ENCODE measurements at regions of chr2 and their contacts with region 1.

Region 1: GRCh38 chr2:31886697-31887096 is 124.1 kb downstream of the MEMO1 start:
- DNase-seq: peak in 2 of 4 experiments; percentile 16 to 44
- ATAC-seq: peak; percentile 95
- H3K4me3 ChIP-seq: no peak overlapping the region
- H3K27ac ChIP-seq: no peak overlapping the region
- H3K4me1 ChIP-seq: no peaks in the 10 kb centered on the region
- H3K27me3 ChIP-seq: no peaks in the 10 kb centered on the region
- CTCF ChIP-seq: peak; percentile 38 to 45 (median 44); a peak in 4 of 6 replicates
- EP300 ChIP-seq: no peak
- POLR2A ChIP-seq: no peak
- RAD21 ChIP-seq: peak in 1 of 2 experiments; percentile 45; a peak in 2 of 4 replicates

Region 2: DNA sequence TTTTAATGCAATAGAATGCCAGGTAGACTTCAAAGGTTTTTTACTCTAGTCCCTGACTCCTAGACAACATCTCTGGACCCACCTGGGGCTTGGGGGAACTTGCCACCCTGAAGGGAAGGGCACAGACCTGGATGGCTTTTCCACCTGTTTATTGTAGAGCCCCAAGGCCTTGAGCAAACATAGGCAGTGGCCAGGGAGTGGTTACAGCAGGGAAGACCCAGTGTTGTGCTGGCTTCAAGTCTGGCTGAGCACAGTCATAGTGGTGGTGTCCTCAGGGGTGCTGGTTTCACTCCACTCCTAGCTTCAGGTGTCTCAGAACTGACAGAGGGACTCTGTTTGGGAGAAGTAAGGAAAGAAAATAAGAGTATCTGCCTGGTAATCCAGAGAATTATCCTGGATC is 300.5 kb before region 1 on chr2:
- CTCF ChIA-PET with region 1: no interaction called
- POLR2A ChIA-PET with region 1: no interaction called
- in situ Hi-C with region 1: no loop called
- intact Hi-C with region 1: no loop called
- DNase-seq: no peak
- ATAC-seq: no peak
- H3K4me3 ChIP-seq: no peak overlapping the region
- H3K27ac ChIP-seq: no peak overlapping the region
- H3K4me1 ChIP-seq: no peaks in the 10 kb centered on the region
- H3K27me3 ChIP-seq: peaks cover 4 to 12% of the 10 kb centered on the region in 2 experiments; a peak in 3 of 5 replicates
- CTCF ChIP-seq: no peak
- EP300 ChIP-seq: no peak
- POLR2A ChIP-seq: no peak
- RAD21 ChIP-seq: no peak

Region 3: GRCh38 chr2:32010670-32011484 is 124.2 kb after region 1 on chr2 and contains the start of gene MEMO1:
- CTCF ChIA-PET with region 1: no interaction called
- POLR2A ChIA-PET with region 1: interaction called, 5 read pairs
- in situ Hi-C with region 1: no loop called
- intact Hi-C with region 1: loop called (anchors 10 kb)
- DNase-seq: peak; percentile 93 to 96 (median 94)
- ATAC-seq: peak; percentile 87
- H3K4me3 ChIP-seq: peak within 1 kb of the TSS; percentile 92
- H3K27ac ChIP-seq: peak within 1 kb of the TSS; percentile 95
- H3K4me1 ChIP-seq: peaks cover 18 to 31% of the 10 kb centered on the region in 2 experiments
- H3K27me3 ChIP-seq: no peaks in the 10 kb centered on the region
- CTCF ChIP-seq: peak in 2 of 3 experiments; percentile 2 to 6; a peak in 2 of 6 replicates
- EP300 ChIP-seq: no peak
- POLR2A ChIP-seq: peak; percentile 91
- RAD21 ChIP-seq: peak; percentile 13 to 19; a peak in 1 of 4 replicates
- polyA plus RNA-seq, gene MEMO1: 81.6 to 87.7 TPM